ENCODE measurements at regions of chr14 and their contacts with region 1.

Region 1: GRCh38 chr14:63852817-63853731 is at the start of gene SYNE2:
- DNase-seq: peak; percentile 89
- ATAC-seq: peak; percentile 86
- H3K4me3 Mint-ChIP-seq: peak within 1 kb of the TSS; percentile 95
- H3K27ac Mint-ChIP-seq: peak within 1 kb of the TSS; percentile 85
- H3K4me1 Mint-ChIP-seq: peaks cover 35% of the 10 kb centered on the region
- H3K27me3 Mint-ChIP-seq: no peaks in the 10 kb centered on the region
- total RNA-seq, gene SYNE2: 18.4 to 21.8 TPM

Region 2: DNA sequence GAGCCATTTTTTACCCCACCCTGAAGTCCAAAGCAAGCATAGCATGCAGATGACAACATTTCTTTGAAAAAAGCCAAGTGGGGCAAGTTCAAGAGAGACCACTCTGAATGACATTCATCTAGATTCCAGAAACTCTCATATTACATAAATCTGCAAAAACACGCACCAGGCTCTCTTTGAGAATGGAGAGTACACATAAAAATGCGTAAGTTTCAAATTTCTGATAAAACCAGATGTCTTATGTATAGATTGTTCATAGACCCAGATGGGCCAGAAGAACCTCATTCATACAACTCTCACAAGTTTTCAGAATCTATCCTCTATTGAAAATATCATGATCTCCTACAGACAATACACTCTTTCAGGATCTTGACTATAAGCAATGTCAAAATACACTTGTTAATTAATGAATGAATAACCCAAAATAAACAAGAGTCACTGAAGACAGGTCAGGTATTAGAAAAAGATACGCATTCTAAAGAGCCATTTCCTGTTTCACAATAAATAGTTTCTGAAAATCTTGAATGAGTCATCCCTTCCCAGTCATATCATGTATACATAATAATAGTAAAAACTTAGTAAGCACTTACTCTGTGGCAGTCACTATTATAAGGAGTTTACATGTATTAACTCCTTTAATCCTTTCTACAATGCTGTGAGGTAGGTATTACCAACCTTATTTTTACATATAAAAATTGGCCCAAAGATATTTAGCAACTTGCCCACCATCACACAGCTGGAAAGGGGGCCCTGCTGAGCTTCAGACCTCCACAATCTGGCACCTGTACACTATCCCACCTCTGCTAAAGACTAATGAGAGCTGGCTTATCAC is 381.9 kb before region 1 on chr14:
- CTCF ChIA-PET with region 1: no interaction called
- POLR2A ChIA-PET with region 1: no interaction called
- intact Hi-C with region 1: loop called in 1 of 2 experiments (anchors 10 kb)
- DNase-seq: no peak
- ATAC-seq: peak; percentile 87
- H3K4me3 Mint-ChIP-seq: no peak overlapping the region
- H3K27ac Mint-ChIP-seq: peak overlapping the region; percentile 55
- H3K4me1 Mint-ChIP-seq: peaks cover 59% of the 10 kb centered on the region
- H3K27me3 Mint-ChIP-seq: no peaks in the 10 kb centered on the region

Region 3: GRCh38 chr14:63641473-63642228 is 211.4 kb before region 1 on chr14 and contains the start of gene WDR89:
- CTCF ChIA-PET with region 1: no interaction called
- POLR2A ChIA-PET with region 1: no interaction called
- intact Hi-C with region 1: loop called in 1 of 2 experiments (anchors 1 kb)
- DNase-seq: peak; percentile 98
- ATAC-seq: peak; percentile 87
- H3K4me3 Mint-ChIP-seq: peak within 1 kb of the TSS; percentile 79
- H3K27ac Mint-ChIP-seq: peak within 1 kb of the TSS; percentile 97
- H3K4me1 Mint-ChIP-seq: peaks cover 43% of the 10 kb centered on the region
- H3K27me3 Mint-ChIP-seq: no peaks in the 10 kb centered on the region
- total RNA-seq, gene WDR89: 13.9 to 27.2 TPM

Region 4: DNA sequence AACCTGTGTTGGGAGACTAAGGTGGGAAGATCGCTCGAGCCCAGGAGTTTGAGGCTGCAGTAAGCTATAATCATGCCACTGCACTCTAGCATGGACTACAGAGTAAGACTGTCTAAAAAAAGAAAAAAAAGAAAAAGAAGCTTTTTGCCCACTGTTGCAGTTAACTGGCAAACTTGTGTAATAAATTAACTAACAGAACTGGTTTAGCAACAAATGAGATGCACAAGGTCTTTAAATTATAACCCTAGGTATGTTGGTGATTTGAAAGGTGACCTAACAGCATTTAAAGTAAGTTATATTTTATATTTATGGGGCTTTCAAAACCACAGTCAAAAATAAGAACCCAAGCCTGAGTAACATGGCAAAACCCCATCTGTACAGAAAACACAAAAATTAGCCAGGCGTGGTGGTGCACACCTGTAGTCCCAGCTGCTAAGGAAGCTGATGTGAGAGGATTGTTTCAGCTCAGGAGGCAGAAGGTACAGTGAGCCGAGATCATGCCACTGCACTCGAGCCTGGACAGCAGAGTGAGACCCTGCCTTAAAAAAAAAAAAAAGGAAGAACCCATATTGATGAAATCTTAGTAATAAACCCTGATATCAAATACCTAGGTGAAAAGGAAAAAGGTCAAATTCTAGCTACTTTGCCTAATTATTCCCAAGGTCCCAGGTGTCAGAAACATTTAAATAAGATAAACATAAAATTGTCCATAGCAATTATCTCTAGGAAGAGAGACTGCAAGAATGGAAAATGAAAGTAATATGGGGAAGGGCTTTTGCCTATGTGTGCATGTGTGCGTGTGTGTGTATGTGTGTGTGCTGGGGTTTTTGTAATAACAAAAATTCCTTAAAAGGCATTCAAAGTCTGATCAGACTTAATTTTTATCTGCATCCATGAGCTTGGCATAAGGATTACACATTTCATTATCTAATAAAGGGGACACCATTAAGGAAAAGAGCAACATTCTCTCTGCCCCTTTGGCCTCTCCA is 15.2 kb after region 1 on chr14:
- CTCF ChIA-PET with region 1: interaction called, 12 read pairs
- POLR2A ChIA-PET with region 1: interaction called, 11 read pairs
- intact Hi-C with region 1: loop called (anchors 1 kb)
- DNase-seq: peak; percentile 26
- ATAC-seq: no peak
- H3K4me3 Mint-ChIP-seq: peak overlapping the region; percentile 1
- H3K27ac Mint-ChIP-seq: peak overlapping the region; percentile 70
- H3K4me1 Mint-ChIP-seq: peaks cover 62% of the 10 kb centered on the region
- H3K27me3 Mint-ChIP-seq: no peaks in the 10 kb centered on the region

Region 5: DNA sequence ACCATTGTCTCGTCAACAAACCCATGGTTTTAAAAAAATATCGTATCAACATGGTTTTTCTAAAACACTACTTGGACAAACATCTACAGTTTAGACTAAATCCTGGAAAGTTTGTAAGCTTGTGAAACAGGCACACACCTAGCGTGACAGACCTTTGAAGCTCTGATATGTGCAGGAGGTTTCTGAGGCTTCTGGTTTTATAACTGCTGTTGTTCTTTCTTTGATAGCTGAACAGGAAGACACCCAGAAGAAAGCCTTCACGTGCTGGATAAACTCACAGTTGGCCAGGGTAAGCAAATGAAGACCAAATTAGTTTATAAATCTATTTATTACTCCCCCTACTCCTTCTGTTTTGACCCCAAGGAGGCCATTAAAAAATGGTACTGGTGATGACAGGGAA is 87.3 kb after region 1 on chr14:
- CTCF ChIA-PET with region 1: no interaction called
- POLR2A ChIA-PET with region 1: no interaction called
- intact Hi-C with region 1: loop called (anchors 5 kb)
- DNase-seq: no peak
- ATAC-seq: peak; percentile 38
- H3K4me3 Mint-ChIP-seq: no peak overlapping the region
- H3K27ac Mint-ChIP-seq: peak overlapping the region; percentile 16
- H3K4me1 Mint-ChIP-seq: peaks cover 23% of the 10 kb centered on the region
- H3K27me3 Mint-ChIP-seq: no peaks in the 10 kb centered on the region

Region 6: GRCh38 chr14:63993992-63994391 is 140.9 kb after region 1 on chr14:
- CTCF ChIA-PET with region 1: no interaction called
- POLR2A ChIA-PET with region 1: no interaction called
- intact Hi-C with region 1: loop called in 1 of 2 experiments (anchors 5 kb)
- DNase-seq: no peak
- ATAC-seq: no peak
- H3K4me3 Mint-ChIP-seq: no peak overlapping the region
- H3K27ac Mint-ChIP-seq: no peak overlapping the region
- H3K4me1 Mint-ChIP-seq: peaks cover 3% of the 10 kb centered on the region
- H3K27me3 Mint-ChIP-seq: no peaks in the 10 kb centered on the region

Region 7: DNA sequence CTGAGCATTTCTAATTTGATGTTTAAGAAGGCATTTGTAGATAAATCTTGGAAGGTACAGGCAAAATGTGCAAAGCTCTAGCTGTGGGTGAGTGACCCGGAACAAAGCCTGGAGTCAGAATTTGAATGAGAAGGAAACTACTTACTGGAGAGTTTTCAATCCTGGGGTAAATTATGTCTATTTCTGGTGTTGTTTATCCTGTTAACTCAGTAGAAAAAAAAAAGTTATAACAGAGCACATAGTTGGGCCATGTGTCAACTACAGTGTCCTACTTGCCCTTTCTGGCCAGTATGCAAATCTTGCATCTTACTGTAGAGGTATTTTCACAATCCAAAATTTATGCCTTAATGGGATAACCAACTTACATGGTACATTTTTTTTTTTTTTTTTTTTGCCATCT is 182.1 kb after region 1 on chr14:
- CTCF ChIA-PET with region 1: no interaction called
- POLR2A ChIA-PET with region 1: no interaction called
- intact Hi-C with region 1: no loop called
- DNase-seq: no peak
- ATAC-seq: no peak
- H3K4me3 Mint-ChIP-seq: no peak overlapping the region
- H3K27ac Mint-ChIP-seq: no peak overlapping the region
- H3K4me1 Mint-ChIP-seq: no peaks in the 10 kb centered on the region
- H3K27me3 Mint-ChIP-seq: no peaks in the 10 kb centered on the region

Region 8: DNA sequence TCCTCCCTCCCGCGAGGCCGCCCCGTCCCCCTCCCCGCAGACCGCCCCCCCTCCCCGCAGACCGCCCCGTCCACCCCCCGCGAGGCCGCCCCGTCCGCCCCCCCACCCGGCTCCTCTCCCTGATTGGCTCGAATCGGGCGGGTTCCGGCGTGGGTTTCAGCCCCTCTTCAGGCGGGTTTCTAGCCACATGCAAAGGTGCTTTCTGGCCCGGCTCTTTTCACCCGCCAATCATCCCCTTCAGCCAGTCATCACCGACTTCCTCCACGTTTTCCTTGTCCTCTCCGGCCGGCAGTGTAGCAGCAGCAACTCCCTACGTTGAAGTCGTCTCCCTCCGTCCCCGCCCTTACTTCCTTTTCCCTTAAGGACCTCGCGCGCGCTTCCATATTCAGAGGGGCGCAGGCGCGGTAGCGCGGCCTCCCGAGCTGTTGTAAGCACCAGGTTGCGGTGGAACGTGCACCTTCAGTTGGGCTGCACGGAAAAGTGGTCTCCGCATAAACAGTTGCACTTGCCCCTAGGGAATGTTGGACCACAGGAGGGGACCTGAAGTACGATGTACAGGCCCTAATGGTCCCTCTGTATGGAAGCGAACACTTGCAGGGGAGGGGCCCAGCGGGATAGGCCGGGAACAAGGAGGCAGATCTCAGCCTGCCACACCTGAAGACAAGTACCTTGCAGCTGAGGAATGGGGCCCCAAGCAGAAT is 485.7 kb after region 1 on chr14:
- CTCF ChIA-PET with region 1: no interaction called
- POLR2A ChIA-PET with region 1: no interaction called
- intact Hi-C with region 1: loop called (anchors 2 kb)
- DNase-seq: peak; percentile 92
- ATAC-seq: peak; percentile 88
- H3K4me3 Mint-ChIP-seq: peak overlapping the region; percentile 93
- H3K27ac Mint-ChIP-seq: peak overlapping the region; percentile 87
- H3K4me1 Mint-ChIP-seq: peaks cover 18% of the 10 kb centered on the region
- H3K27me3 Mint-ChIP-seq: no peaks in the 10 kb centered on the region

Measured in activated CD4-positive, alpha-beta T cell treated with anti-CD3 and anti-CD28 coated beads for 36 hours (primary cell).